Heart right ventricle (tissue), 16 donors: ENCODE measurements at regions of chr1 and their contacts with region 1.

Region 1: DNA sequence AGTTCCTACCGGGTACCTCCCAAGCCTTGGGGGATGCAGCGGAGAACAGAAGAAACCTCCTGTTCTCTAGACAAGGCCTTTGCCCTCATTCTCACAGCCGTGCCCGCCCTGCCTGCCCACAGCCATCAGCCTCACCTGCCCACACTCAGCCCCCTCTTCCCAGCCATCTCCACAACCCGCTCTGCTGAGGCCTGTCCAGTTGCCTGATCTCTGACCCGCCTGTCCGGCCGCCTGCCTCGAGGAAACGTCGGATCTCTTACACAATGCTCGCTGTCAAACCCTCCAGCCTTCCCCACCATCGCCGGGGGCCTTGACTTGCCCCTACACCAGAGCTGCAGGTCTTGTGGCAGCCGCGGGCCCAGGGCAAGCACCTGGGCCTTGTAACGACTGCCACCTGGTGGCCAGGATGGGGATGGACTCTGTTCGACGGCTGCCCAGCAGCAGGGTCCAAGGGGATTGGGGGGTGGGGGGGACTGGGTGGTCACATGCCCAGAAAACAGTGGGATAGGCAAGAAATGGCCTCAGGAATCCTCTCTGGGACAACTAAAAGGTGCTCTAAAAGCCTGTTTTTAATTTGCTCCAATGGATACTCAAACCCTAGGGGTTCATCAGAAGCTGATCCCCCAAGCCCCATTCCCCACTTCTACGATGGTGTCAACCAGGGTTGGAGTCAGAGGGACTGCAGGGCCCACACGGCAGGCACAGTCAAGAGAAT is 31.0 kb downstream of the SLC45A1 start:
- DNase-seq: peak; percentile 63 to 76
- ATAC-seq: peak; percentile 32 to 73 (median 58)
- H3K4me3 ChIP-seq: no peak overlapping the region
- H3K27ac ChIP-seq: no peak overlapping the region
- H3K4me1 ChIP-seq: peaks cover 9 to 60% (median 42%) of the 10 kb centered on the region in 9 donors
- H3K27me3 ChIP-seq: no peaks in the 10 kb centered on the region
- CTCF ChIP-seq: peak; percentile 80 to 90 (median 85)

Region 2: GRCh38 chr1:7983086-7983778 is 365.7 kb before region 1 on chr1:
- intact Hi-C with region 1: loop called in 4 of 10 experiments (anchors 2 to 10 kb)
- DNase-seq: peak in 1 of 2 donors; percentile 7
- ATAC-seq: peak in 6 of 8 donors; percentile 54 to 71 (median 68)
- H3K4me3 ChIP-seq: no peak overlapping the region
- H3K27ac ChIP-seq: peak overlapping the region in 1 of 10 donors; percentile 4
- H3K4me1 ChIP-seq: peaks cover 0 to 26% (median 15%) of the 10 kb centered on the region in 9 donors
- H3K27me3 ChIP-seq: no peaks in the 10 kb centered on the region
- CTCF ChIP-seq: no peak

Region 3: DNA sequence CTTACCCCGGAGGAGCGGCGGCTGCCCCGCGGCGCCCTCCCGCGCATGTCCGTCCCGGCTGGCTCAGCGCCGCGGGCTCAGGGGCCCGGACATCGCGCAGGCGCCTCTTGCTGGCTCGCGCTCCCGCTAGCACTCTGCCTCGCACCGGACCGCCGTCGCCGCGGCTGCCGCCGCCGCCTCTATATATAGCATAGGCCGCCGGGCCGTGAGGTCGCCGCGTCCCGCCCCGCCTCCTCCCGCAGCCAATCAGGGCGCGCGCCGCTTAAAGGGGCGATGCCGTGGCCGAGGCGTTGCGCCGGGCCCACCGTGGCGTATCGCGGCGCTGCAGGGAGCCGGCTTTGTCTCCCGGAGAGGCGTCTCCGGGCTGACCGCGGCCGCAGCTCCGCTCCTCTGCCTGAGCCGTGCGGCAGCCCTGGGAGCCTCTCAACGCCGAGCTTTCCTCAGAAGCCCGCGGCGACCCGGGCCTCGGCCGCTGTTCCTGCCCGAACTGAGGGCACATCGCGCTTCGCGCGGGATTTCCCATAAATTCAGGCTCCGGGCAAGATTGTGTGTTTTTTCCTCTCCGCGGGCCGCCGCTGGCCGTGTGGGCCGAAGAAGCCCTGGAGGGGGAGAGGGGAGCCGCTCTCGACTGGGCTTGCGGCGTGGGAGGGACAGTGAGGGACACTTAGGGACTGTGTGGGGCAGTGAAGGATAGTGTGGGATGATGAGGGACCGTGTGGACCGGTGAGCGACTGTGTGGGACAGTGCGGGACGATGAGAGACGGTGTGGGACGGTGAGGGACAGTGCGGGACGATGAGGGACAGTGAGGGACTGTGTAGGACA is 322.6 kb before region 1 on chr1 and contains the start of gene ERRFI1:
- intact Hi-C with region 1: loop called in 1 of 10 experiments (anchors 2 kb)
- DNase-seq: peak; percentile 93 to 97
- ATAC-seq: peak; percentile 96 to 99 (median 97)
- H3K4me3 ChIP-seq: peak within 1 kb of the TSS; percentile 51 to 91 (median 88)
- H3K27ac ChIP-seq: peak within 1 kb of the TSS; percentile 87 to 94 (median 90)
- H3K4me1 ChIP-seq: peaks cover 0 to 59% (median 35%) of the 10 kb centered on the region in 9 donors
- H3K27me3 ChIP-seq: peaks cover 0 to 58% (median 0%) of the 10 kb centered on the region in 7 donors
- CTCF ChIP-seq: no peak
- total RNA-seq, gene ERRFI1: 5.8 to 15.9 (median 10.0) TPM

Region 4: GRCh38 chr1:8409106-8409505 is 60.2 kb after region 1 on chr1:
- intact Hi-C with region 1: loop called in 1 of 10 experiments (anchors 10 kb)
- DNase-seq: peak in 1 of 2 donors; percentile 44
- ATAC-seq: peak; percentile 24 to 70 (median 54)
- H3K4me3 ChIP-seq: peak overlapping the region in 1 of 10 donors; percentile 5
- H3K27ac ChIP-seq: peak overlapping the region; percentile 63 to 96 (median 84)
- H3K4me1 ChIP-seq: peaks cover 53 to 97% (median 81%) of the 10 kb centered on the region in 9 donors
- H3K27me3 ChIP-seq: no peaks in the 10 kb centered on the region
- CTCF ChIP-seq: peak; percentile 15 to 67 (median 45)

Region 5: DNA sequence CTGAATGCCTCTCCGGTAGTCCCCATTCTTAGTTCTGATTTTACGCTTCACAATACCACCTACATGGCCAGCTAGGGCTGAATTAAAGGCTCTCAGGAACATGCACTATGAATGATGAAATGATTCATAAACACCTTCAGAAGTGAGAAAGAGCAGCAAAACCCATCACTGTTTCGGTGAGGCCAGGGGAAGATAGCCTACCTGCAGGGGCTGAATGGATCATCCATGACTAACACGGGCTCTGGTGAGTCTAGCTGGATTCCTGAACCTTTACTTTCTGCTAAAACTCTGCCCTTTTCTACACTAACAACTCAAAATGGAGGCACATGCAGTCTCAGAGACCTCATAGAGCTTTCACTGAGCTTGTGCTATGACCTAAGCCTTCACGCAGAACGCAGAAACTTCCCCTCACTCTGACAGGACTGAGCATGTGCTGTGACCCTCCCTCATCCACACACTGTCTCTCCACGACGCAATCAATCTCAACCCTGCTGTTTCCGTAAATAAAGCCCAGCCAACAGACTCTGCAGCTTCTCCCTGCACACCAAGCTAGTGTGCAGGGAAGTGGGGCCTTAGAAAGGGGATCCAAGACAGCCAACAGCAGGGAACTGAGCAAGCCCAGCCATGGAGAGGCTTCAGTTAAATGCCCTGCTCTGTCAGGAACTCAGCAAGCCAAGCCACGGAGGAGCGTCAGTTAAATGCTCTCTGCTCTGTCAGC is 176.8 kb after region 1 on chr1:
- intact Hi-C with region 1: loop called in 2 of 10 experiments (anchors 5 to 10 kb)
- DNase-seq: peak; percentile 50 to 92
- ATAC-seq: peak; percentile 98 to 99 (median 99)
- H3K4me3 ChIP-seq: peak overlapping the region; percentile 0 to 64 (median 60)
- H3K27ac ChIP-seq: peak overlapping the region; percentile 46 to 93 (median 86)
- H3K4me1 ChIP-seq: peaks cover 10 to 57% (median 48%) of the 10 kb centered on the region in 9 donors
- H3K27me3 ChIP-seq: no peaks in the 10 kb centered on the region
- CTCF ChIP-seq: no peak